Breast epithelium (tissue), 4 donors: ENCODE measurements at regions of chr6 and their contacts with region 1.

Region 1: GRCh38 chr6:46312654-46313053 is 141.9 kb upstream of the ENPP5 start:
- DNase-seq: no peak
- H3K4me3 ChIP-seq: no peak overlapping the region
- H3K27ac ChIP-seq: no peak overlapping the region
- H3K4me1 ChIP-seq: no peaks in the 10 kb centered on the region
- H3K27me3 ChIP-seq: no peaks in the 10 kb centered on the region
- CTCF ChIP-seq: no peak
- POLR2A ChIP-seq: no peak

Region 2: GRCh38 chr6:45843848-45844521 is 468.7 kb before region 1 on chr6:
- intact Hi-C with region 1: no loop called
- DNase-seq: no peak
- H3K4me3 ChIP-seq: no peak overlapping the region
- H3K27ac ChIP-seq: no peak overlapping the region
- H3K4me1 ChIP-seq: no peaks in the 10 kb centered on the region
- H3K27me3 ChIP-seq: no peaks in the 10 kb centered on the region
- CTCF ChIP-seq: no peak
- POLR2A ChIP-seq: no peak

Region 3: DNA sequence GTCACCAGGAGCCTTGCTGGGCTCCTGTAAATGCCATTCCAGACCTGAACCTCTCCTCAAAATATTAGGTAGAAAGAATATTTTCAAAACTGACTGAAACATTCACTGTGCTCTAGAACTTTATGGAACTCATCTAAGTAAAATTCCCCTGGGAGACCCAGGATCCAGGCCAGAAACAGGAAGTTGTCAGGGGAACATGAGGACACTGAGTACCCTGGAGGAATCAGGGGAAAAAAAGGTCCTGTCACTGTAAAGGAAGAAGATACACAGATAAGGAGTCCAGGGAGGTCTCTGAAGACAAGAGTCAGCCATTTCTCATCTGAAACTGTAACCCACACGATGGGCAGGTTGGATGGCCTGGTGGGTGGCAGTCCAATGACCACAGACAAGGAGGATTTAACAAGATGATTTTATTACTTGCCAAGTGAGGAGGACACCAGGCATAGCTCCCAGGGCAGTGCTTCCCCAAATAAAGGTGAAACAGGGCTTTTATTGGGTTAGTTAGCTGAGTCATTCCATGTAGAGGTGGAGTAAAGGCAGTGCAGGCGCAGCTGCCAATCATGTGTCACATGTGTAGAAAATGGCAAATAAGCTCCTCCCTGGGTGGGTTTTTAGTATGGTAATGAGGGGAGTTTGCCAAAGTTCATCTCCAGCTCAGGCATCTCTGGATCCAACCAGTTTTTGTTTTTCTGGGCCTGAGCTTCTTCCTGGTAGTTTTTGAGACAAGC is 40.1 kb after region 1 on chr6:
- intact Hi-C with region 1: loop called (anchors 1 kb)
- DNase-seq: no peak
- H3K4me3 ChIP-seq: no peak overlapping the region
- H3K27ac ChIP-seq: no peak overlapping the region
- H3K4me1 ChIP-seq: no peaks in the 10 kb centered on the region
- H3K27me3 ChIP-seq: no peaks in the 10 kb centered on the region
- CTCF ChIP-seq: no peak
- POLR2A ChIP-seq: no peak

Region 4: DNA sequence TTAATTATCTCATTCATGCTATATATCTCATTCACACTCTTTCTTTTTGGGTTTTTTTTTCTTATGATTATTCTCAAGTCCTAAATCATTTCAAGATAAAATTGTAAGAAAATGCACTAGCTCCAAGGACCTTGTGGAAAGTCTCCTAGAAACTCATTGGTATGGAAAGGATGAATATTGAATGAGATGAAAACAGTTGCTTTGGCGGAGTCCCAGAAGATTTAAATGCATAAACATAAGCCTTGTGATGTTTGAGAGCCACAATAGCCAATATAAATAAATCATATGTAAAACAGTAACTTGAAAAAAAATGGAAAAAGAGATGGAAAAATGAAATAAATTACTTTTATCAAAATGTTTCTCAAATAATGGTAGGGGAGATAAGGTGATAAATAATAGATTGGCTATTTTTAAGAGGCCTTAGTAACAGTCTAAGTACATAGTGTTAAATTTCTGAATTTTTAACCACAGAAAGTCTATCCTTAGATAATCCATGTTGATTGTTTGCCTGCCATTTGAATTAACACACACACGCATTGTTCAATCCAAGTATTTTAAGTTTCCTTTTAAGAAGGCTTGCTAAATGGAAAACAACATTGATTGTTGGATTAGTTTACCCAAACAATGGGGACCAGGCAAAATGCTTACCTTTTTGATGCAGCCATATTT is 1083.9 kb after region 1 on chr6:
- intact Hi-C with region 1: no loop called
- DNase-seq: no peak
- H3K4me3 ChIP-seq: no peak overlapping the region
- H3K27ac ChIP-seq: no peak overlapping the region
- H3K4me1 ChIP-seq: no peaks in the 10 kb centered on the region
- H3K27me3 ChIP-seq: no peaks in the 10 kb centered on the region
- CTCF ChIP-seq: no peak
- POLR2A ChIP-seq: no peak